ENCODE measurements at regions of chr9 and their contacts with region 1.

Region 1: GRCh38 chr9:20558566-20559016 is 63.7 kb downstream of the MLLT3 start:
- DNase-seq: no peak
- H3K4me3 ChIP-seq: no peak overlapping the region
- H3K27ac ChIP-seq: peak overlapping the region in 4 of 59 donors; percentile 8 to 21 (median 13)
- H3K27me3 ChIP-seq: no peaks in the 10 kb centered on the region
- CTCF ChIP-seq: no peak

Region 2: DNA sequence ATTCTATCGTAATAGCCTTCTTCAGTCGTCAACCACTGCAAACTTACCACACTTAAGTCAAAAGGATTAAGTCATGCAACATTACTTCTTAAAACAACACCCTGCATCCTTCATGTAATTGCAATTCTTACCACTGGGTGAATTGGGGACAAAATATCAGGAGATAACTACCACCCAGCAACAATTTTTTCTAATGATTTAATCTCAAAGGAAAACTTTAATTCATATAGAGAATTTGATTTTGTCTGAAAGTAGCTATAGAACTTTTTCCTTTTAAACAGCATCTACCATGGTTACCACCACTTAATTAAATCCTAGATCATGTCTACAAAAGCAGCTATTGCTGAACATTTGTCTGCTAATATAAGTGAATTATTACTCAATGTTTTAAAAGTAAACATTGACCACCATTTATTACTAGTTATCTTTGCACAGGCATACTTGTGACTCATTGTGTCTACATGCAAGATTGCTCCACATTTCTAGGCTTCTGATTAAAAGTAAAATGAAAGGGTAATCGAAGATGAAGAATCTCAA is 53.2 kb after region 1 on chr9:
- intact Hi-C with region 1: loop called in 1 of 2 experiments (anchors 10 kb)
- DNase-seq: no peak
- H3K4me3 ChIP-seq: no peak overlapping the region
- H3K27ac ChIP-seq: peak overlapping the region in 1 of 59 donors; percentile 22
- H3K27me3 ChIP-seq: no peaks in the 10 kb centered on the region
- CTCF ChIP-seq: peak in 48 of 56 donors; percentile 16 to 58 (median 39)